Ascending aorta (tissue), 2 donors: ENCODE measurements at regions of chr12 and their contacts with region 1.

Region 1: DNA sequence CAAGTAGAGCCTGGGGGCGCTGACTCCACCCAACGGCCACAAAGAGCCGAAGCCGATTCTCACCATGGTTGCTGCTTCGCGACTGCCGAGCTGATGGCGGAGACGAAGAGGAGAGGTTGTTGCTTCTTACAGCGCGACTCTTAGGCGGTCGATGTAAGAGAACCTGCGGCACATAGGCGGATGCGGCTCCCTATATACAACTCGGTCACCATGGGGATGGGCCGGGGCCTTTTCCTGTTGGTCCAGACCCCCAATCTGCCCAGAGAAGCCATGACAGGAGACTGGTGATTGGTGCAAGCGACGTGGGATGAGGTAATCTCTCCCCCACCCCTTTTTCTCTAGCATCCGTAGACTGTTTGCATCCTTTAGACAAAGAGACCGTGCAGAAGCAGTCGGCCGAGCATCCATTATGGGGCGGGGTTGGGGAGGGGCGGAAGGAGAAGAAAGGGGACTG is at the start of gene TUBA1A:
- DNase-seq: peak; percentile 95 to 98
- H3K4me3 ChIP-seq: peak within 1 kb of the TSS; percentile 91 to 97
- H3K27ac ChIP-seq: peak within 1 kb of the TSS; percentile 99 to 100
- H3K4me1 ChIP-seq: peaks cover 7 to 10% of the 10 kb centered on the region in 2 donors
- H3K27me3 ChIP-seq: no peaks in the 10 kb centered on the region
- CTCF ChIP-seq: no peak
- total RNA-seq, gene TUBA1A: 214 TPM

Region 2: GRCh38 chr12:47758834-47759690 is 1429.9 kb before region 1 on chr12 and contains the start of gene RAPGEF3:
- intact Hi-C with region 1: no loop called
- DNase-seq: peak; percentile 62 to 94
- H3K4me3 ChIP-seq: peak within 1 kb of the TSS; percentile 80 to 81
- H3K27ac ChIP-seq: peak within 1 kb of the TSS; percentile 87 to 94
- H3K4me1 ChIP-seq: peaks cover 18 to 38% of the 10 kb centered on the region in 2 donors
- H3K27me3 ChIP-seq: no peaks in the 10 kb centered on the region
- CTCF ChIP-seq: peak; percentile 32 to 39 (median 33)
- total RNA-seq, gene RAPGEF3: 165 TPM

Region 3: DNA sequence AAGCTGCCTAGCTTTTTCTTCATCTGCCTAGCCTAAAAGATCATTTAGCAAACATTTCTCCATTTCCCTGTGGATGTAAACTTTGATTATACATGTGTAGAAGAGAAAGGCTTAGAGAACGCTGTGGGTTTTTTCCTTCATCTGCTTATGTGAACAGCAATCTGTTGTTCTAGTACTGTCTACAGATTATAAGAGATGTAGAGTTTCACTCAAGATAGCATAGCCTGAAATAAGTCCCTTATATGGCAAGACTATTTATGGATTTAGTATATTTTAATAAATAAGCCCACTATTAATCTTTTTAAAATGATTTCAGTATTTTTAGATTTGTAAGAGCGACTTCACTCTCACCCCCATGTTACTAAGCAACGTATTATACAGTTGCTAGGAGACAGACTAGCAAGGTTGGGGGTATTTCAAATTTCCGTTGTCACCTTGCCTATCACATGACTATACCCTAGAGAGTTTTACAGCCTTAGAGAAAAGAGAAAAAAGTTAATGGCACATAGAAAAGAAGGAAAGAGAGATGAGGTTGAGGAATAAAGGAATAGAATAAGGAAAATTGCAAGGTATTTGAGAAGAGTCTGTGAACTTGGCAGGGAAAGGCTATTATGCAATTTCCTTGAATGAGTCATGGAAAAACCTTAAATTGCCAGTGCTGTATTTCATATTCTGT is 12.1 kb after region 1 on chr12:
- intact Hi-C with region 1: loop called (anchors 1 kb)
- DNase-seq: no peak
- H3K4me3 ChIP-seq: peak overlapping the region; percentile 29 to 34
- H3K27ac ChIP-seq: peak overlapping the region; percentile 53 to 86
- H3K4me1 ChIP-seq: peaks cover 6 to 7% of the 10 kb centered on the region in 2 donors
- H3K27me3 ChIP-seq: no peaks in the 10 kb centered on the region
- CTCF ChIP-seq: no peak

Region 4: GRCh38 chr12:49244176-49244575 is 55.2 kb after region 1 on chr12:
- intact Hi-C with region 1: no loop called
- DNase-seq: no peak
- H3K4me3 ChIP-seq: no peak overlapping the region
- H3K27ac ChIP-seq: peak overlapping the region; percentile 66 to 69
- H3K4me1 ChIP-seq: peaks cover 3 to 7% of the 10 kb centered on the region in 2 donors
- H3K27me3 ChIP-seq: no peaks in the 10 kb centered on the region
- CTCF ChIP-seq: no peak

Region 5: GRCh38 chr12:49264738-49265515 is 76.0 kb after region 1 on chr12 and contains the start of gene TUBA1C:
- intact Hi-C with region 1: loop called (anchors 1 kb)
- DNase-seq: peak; percentile 78 to 95
- H3K4me3 ChIP-seq: peak within 1 kb of the TSS; percentile 85 to 88
- H3K27ac ChIP-seq: peak within 1 kb of the TSS; percentile 95 to 99
- H3K4me1 ChIP-seq: peaks cover 7 to 36% of the 10 kb centered on the region in 2 donors
- H3K27me3 ChIP-seq: no peaks in the 10 kb centered on the region
- CTCF ChIP-seq: peak in 1 of 3 experiments; percentile 9
- total RNA-seq, gene TUBA1C: 370 TPM

Region 6: GRCh38 chr12:49534731-49535278 is 345.9 kb after region 1 on chr12:
- intact Hi-C with region 1: no loop called
- DNase-seq: no peak
- H3K4me3 ChIP-seq: no peak overlapping the region
- H3K27ac ChIP-seq: no peak overlapping the region
- H3K4me1 ChIP-seq: peaks cover 0 to 9% of the 10 kb centered on the region in 2 donors
- H3K27me3 ChIP-seq: peaks cover 5% of the 10 kb centered on the region
- CTCF ChIP-seq: no peak